Activated CD4-positive, alpha-beta T cell treated with anti-CD3 and anti-CD28 coated beads, Interleukin-2, amount 10 ng/mL, durations not matched to agents 24 days and 14 days (primary cell): ENCODE measurements at regions of chr5 and their contacts with region 1.

Region 1: DNA sequence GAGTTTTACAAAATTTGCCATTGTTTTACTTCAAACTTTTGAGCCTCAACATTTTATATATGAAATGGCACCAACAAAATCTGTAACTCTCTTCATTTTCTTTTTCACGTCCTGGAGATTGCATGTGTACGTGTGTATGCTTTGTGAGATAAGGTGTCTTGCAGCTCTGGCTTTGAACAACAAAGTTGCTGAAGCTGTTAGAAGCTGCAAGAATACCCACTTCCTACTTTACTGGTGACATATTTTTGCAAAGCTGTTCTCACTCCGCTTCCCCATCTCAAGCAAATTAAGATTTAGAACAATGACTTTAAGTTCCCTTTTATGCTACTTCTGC is 41.8 kb downstream of the FYB1 start:
- DNase-seq: peak; percentile 83
- H3K4me3 Mint-ChIP-seq: peak overlapping the region; percentile 75
- H3K27ac Mint-ChIP-seq: peak overlapping the region; percentile 93
- H3K4me1 Mint-ChIP-seq: peaks cover 88% of the 10 kb centered on the region
- H3K27me3 Mint-ChIP-seq: no peaks in the 10 kb centered on the region

Region 2: GRCh38 chr5:39074016-39074886 is 103.3 kb before region 1 on chr5 and contains the start of gene RICTOR:
- intact Hi-C with region 1: loop called (anchors 1 kb)
- DNase-seq: peak; percentile 97
- H3K4me3 Mint-ChIP-seq: peak within 1 kb of the TSS; percentile 98
- H3K27ac Mint-ChIP-seq: peak within 1 kb of the TSS; percentile 98
- H3K4me1 Mint-ChIP-seq: peaks cover 36% of the 10 kb centered on the region
- H3K27me3 Mint-ChIP-seq: peaks cover 8% of the 10 kb centered on the region
- total RNA-seq, gene RICTOR: 31.1 and 34.2 TPM in 2 replicates

Region 3: GRCh38 chr5:39164529-39165402 is 12.8 kb before region 1 on chr5:
- intact Hi-C with region 1: loop called (anchors 1 kb)
- DNase-seq: peak; percentile 75
- H3K4me3 Mint-ChIP-seq: peak overlapping the region; percentile 71
- H3K27ac Mint-ChIP-seq: peak overlapping the region; percentile 98
- H3K4me1 Mint-ChIP-seq: peaks cover 66% of the 10 kb centered on the region
- H3K27me3 Mint-ChIP-seq: no peaks in the 10 kb centered on the region

Region 4: DNA sequence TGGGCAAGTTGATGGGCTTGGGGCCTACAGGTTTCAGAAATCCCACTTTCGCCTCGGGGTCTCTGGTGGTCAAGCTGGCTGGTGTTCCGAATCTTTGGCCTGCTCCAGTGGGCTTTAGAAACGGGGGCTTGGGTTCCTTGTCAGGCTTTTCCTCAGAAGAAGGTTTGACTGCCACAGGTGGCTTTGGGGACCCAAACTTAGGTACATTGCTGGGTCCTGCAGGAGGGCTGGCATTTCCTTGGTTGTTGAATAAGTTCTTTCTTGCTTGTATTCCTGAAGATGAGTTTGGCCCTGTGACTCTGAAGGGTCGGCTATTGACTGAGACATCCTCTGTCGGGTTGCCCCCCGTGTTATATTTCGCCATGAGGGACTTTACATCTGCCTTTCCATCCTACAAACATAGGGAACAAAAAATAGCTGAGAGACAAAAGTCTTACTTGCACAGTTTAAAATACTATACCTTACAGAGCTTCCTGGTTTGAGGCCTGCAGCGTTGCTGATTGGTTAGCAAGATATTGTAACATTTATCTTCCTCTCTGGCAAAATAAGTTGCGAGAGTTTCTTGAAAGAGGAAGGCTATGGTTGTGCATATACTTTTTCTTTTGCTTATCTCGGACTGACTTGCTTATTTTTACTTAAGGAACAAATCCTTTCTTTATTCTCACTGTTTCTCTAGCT is 25.1 kb after region 1 on chr5:
- intact Hi-C with region 1: loop called (anchors 2 kb)
- DNase-seq: peak; percentile 83
- H3K4me3 Mint-ChIP-seq: peak overlapping the region; percentile 90
- H3K27ac Mint-ChIP-seq: peak overlapping the region; percentile 90
- H3K4me1 Mint-ChIP-seq: peaks cover 47% of the 10 kb centered on the region
- H3K27me3 Mint-ChIP-seq: no peaks in the 10 kb centered on the region

Region 5: DNA sequence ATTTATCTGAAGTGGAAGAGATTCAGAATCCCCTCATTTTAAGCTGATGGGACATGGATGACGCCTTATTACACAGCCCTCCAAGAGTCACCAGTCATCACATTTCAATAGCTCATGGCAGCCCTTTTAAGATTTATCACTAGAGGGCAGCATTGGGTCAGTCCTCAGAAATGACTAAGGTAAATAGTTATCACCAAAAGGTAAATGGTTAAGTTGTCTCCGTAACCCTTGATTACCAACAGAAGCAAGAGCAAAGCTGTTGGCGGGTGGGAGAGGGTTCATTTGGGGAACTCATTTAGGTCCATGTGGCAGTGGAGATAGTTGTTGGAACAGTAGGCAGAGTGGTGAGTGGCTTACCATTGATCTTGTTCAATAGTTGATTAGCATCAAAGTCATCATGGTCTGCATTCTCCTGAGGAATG is 198.7 kb after region 1 on chr5:
- intact Hi-C with region 1: no loop called
- DNase-seq: peak; percentile 82
- H3K4me3 Mint-ChIP-seq: no peak overlapping the region
- H3K27ac Mint-ChIP-seq: no peak overlapping the region
- H3K4me1 Mint-ChIP-seq: no peaks in the 10 kb centered on the region
- H3K27me3 Mint-ChIP-seq: peaks cover 20% of the 10 kb centered on the region

Region 6: GRCh38 chr5:40404613-40405012 is 1227.0 kb after region 1 on chr5:
- intact Hi-C with region 1: loop called (anchors 10 kb)
- DNase-seq: peak; percentile 80
- H3K4me3 Mint-ChIP-seq: peak overlapping the region; percentile 21
- H3K27ac Mint-ChIP-seq: peak overlapping the region; percentile 75
- H3K4me1 Mint-ChIP-seq: peaks cover 71% of the 10 kb centered on the region
- H3K27me3 Mint-ChIP-seq: no peaks in the 10 kb centered on the region